Common myeloid progenitor, CD34-positive (primary cell): ENCODE measurements at regions of chr9 and their contacts with region 1.

Region 1: GRCh38 chr9:15211160-15211814 is 95.7 kb downstream of the TTC39B start:
- DNase-seq: peak; percentile 76 to 87 (median 84)
- H3K4me3 ChIP-seq: no peak overlapping the region
- H3K27ac ChIP-seq: no peak overlapping the region
- H3K4me1 ChIP-seq: no peaks in the 10 kb centered on the region
- H3K27me3 ChIP-seq: no peaks in the 10 kb centered on the region

Region 2: DNA sequence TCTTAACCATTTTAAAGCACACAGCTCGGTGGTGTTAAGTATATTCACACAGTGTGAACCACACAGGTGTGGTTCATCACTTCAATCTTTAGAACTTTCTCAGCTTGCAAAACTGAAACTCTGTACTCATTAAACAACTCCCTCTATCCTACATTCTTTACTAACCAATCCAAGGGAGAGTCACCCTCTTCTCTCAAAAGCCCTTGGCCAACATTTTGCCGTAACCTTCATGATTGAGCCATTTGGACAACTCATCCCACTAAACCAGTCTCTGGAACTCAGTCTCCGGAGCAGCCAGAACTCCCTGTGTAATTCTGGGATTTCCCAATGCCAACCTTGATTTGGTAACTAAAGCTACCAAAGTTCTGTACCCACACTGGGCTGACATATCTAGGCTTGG is 11.0 kb after region 1 on chr9:
- CTCF ChIA-PET with region 1: interaction called, 10 read pairs
- POLR2A ChIA-PET with region 1: no interaction called
- DNase-seq: no peak
- H3K4me3 ChIP-seq: no peak overlapping the region
- H3K27ac ChIP-seq: no peak overlapping the region
- H3K4me1 ChIP-seq: no peaks in the 10 kb centered on the region
- H3K27me3 ChIP-seq: no peaks in the 10 kb centered on the region

Region 3: GRCh38 chr9:15239816-15240215 is 28.5 kb after region 1 on chr9:
- CTCF ChIA-PET with region 1: no interaction called
- POLR2A ChIA-PET with region 1: no interaction called
- DNase-seq: no peak
- H3K4me3 ChIP-seq: no peak overlapping the region
- H3K27ac ChIP-seq: no peak overlapping the region
- H3K4me1 ChIP-seq: no peaks in the 10 kb centered on the region
- H3K27me3 ChIP-seq: no peaks in the 10 kb centered on the region

Region 4: GRCh38 chr9:15422372-15423230 is 211.3 kb after region 1 on chr9 and contains the start of gene SNAPC3:
- CTCF ChIA-PET with region 1: interaction called, 85 read pairs
- POLR2A ChIA-PET with region 1: no interaction called
- DNase-seq: peak; percentile 97 to 98 (median 97)
- H3K4me3 ChIP-seq: peak within 1 kb of the TSS; percentile 94 to 99 (median 98)
- H3K27ac ChIP-seq: peak within 1 kb of the TSS; percentile 61 to 78
- H3K4me1 ChIP-seq: peaks cover 6 to 20% (median 14%) of the 10 kb centered on the region in 4 experiments
- H3K27me3 ChIP-seq: no peaks in the 10 kb centered on the region

Region 5: DNA sequence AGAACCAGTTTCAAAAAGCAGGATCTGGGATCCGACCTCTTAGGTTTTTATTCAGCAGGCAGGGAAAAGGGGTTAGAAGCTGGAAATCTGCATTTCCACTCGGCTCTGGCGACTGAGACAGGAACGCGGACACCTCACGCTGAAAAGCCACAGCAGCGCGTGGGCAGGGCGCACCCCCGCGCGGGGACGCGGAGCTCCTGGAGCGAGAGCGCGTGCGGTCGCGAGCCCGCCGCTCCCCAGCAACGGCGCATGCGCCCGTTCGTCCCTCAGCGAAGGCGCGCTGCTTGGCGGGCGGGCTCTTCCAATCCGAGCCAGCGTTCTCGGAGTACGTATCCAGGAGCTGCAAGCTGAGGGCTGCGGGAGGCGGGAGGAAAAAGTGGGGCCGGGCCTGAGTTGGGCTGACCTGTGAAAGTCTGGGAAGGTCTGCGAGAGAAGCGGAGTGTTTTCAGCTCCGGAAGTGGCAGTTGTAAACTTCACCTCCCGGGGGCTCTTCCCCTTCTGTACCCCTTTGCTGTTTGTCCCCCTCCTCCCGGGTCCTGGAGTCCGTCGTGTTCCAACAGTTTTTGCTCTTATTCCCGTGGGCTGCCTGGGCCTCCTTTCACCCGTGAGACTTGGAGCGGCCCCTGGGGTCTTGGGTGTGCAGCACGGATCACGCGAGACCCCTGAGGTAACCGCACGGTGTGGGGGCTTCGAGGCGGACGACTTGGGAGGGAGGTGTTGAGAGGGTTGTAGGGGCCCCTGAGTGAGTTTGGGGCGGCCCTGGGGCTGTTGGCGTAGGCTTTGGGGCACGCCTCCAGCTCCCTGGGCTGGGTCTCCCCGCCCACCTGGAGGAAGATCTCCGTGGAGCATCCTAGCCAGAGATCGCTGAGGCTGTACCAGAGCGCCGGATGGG is 341.6 kb after region 1 on chr9 and contains the start of gene CCDC171:
- CTCF ChIA-PET with region 1: no interaction called
- POLR2A ChIA-PET with region 1: no interaction called
- DNase-seq: peak; percentile 99 to 100 (median 99)
- H3K4me3 ChIP-seq: peak within 1 kb of the TSS; percentile 87 to 99 (median 98)
- H3K27ac ChIP-seq: peak within 1 kb of the TSS; percentile 80 to 91
- H3K4me1 ChIP-seq: peaks cover 2 to 28% (median 15%) of the 10 kb centered on the region in 4 experiments
- H3K27me3 ChIP-seq: no peaks in the 10 kb centered on the region

Region 6: GRCh38 chr9:16191691-16192402 is 980.6 kb after region 1 on chr9:
- CTCF ChIA-PET with region 1: no interaction called
- POLR2A ChIA-PET with region 1: no interaction called
- DNase-seq: peak; percentile 23 to 55 (median 45)
- H3K4me3 ChIP-seq: no peak overlapping the region
- H3K27ac ChIP-seq: no peak overlapping the region
- H3K4me1 ChIP-seq: peaks cover 0 to 2% (median 0%) of the 10 kb centered on the region in 4 experiments
- H3K27me3 ChIP-seq: peaks cover 0 to 4% (median 0%) of the 10 kb centered on the region in 5 experiments